ENCODE measurements at regions of chrX and their contacts with region 1.

Region 1: DNA sequence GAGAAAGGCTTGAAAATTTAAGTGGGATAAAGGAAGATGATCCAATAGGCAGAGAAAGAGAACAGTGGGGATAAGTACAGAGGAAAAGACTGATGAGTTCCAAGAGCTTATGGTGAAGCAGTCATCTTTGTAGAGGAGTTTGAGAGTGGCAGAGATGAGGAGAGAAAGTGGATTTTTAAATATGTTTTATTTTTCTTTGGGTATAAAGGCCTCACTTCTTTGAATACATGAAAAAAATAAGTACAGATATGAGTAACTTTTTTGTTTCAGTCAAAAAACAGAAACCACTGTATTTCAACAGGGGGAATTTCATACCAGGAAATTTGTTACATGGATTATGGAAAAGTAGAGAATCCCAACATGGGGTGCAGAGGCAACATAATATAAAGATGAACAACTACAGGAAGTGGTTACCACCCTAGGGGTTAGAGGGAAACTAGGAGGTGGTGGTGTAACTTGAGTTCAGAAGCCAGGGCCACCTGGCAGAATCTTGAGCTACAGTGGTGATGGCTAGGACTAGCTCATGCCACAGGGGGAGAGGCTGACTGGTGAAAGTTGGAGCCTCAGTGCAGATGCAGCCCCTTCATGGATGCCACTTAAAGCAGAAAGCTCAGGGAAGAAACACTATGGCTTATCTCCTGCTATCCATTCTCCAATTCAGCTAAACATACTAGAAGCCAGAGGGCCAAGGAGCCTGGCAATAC is 3.4 kb upstream of the CYBB start:
- DNase-seq: no peak
- ATAC-seq: peak; percentile 80
- H3K4me3 ChIP-seq: peak overlapping the region; percentile 23; the same call in 1 of the 2 replicates
- H3K27ac ChIP-seq: peak overlapping the region; percentile 85
- H3K4me1 ChIP-seq: peaks cover 22% of the 10 kb centered on the region
- H3K27me3 ChIP-seq: no peaks in the 10 kb centered on the region
- CTCF ChIP-seq: no peak
- EP300 ChIP-seq: no peak
- POLR2A ChIP-seq: no peak
- RAD21 ChIP-seq: no peak

Region 2: GRCh38 chrX:37666516-37666915 is 109.9 kb before region 1 on chrX:
- CTCF ChIA-PET with region 1: no interaction called
- POLR2A ChIA-PET with region 1: no interaction called
- RAD21 ChIA-PET with region 1: no interaction called
- SMC1A ChIA-PET with region 1: no interaction called
- in situ Hi-C with region 1: no loop called
- intact Hi-C with region 1: no loop called
- DNase-seq: no peak
- ATAC-seq: no peak
- H3K4me3 ChIP-seq: no peak overlapping the region
- H3K27ac ChIP-seq: no peak overlapping the region
- H3K4me1 ChIP-seq: no peaks in the 10 kb centered on the region
- H3K27me3 ChIP-seq: no peaks in the 10 kb centered on the region
- CTCF ChIP-seq: no peak
- EP300 ChIP-seq: no peak
- POLR2A ChIP-seq: no peak
- RAD21 ChIP-seq: no peak

Region 3: DNA sequence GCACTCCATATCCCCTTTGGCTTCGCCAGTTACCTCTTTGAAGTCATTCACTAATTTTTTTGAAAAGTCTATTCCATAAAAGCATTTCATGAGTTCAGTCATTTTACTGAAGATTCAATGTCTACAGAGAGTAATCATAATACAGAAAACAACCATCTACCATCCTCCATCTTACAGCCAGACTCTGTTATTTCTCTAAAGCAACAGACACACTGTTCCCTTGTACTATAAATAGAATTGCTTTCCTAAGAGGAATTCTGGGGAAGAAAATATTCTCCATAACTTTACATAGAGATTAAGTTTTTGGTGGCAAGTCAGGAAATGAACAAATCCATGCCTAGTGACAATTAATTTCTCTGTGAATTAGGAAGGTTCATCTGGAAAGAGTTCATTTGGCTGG is 53.8 kb before region 1 on chrX:
- CTCF ChIA-PET with region 1: no interaction called
- POLR2A ChIA-PET with region 1: no interaction called
- RAD21 ChIA-PET with region 1: no interaction called
- SMC1A ChIA-PET with region 1: no interaction called
- in situ Hi-C with region 1: no loop called
- intact Hi-C with region 1: no loop called
- DNase-seq: no peak
- ATAC-seq: no peak
- H3K4me3 ChIP-seq: no peak overlapping the region
- H3K27ac ChIP-seq: no peak overlapping the region
- H3K4me1 ChIP-seq: no peaks in the 10 kb centered on the region
- H3K27me3 ChIP-seq: no peaks in the 10 kb centered on the region
- CTCF ChIP-seq: no peak
- EP300 ChIP-seq: no peak
- POLR2A ChIP-seq: no peak
- RAD21 ChIP-seq: no peak

Region 4: DNA sequence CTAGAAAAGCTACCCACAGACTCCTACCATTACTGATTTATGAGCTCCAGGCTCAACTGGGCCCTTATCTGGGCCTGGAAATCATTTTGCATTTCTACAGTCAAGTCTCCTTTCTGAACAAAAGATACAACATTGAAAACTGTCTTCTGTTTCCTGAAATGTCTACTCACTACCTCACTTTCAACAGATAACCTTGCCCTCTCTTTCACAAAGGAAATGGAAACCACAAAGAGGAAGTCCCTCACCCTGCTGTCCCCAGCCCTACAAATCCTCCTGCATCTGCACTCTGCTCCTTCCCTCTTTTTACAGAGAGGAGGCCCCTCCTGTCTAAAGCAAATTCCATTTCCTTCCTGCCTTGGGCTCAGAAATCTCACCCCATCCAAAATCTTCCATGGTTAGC is 21.4 kb before region 1 on chrX:
- CTCF ChIA-PET with region 1: interaction called, 9 read pairs
- POLR2A ChIA-PET with region 1: interaction called, 13 read pairs
- RAD21 ChIA-PET with region 1: interaction called, 7 read pairs
- SMC1A ChIA-PET with region 1: interaction called, 72 read pairs
- in situ Hi-C with region 1: no loop called
- intact Hi-C with region 1: no loop called
- DNase-seq: peak; percentile 67
- ATAC-seq: peak; percentile 92
- H3K4me3 ChIP-seq: peak overlapping the region; percentile 10; the same call in 1 of the 2 replicates
- H3K27ac ChIP-seq: peak overlapping the region; percentile 87
- H3K4me1 ChIP-seq: peaks cover 32% of the 10 kb centered on the region
- H3K27me3 ChIP-seq: no peaks in the 10 kb centered on the region
- CTCF ChIP-seq: no peak
- EP300 ChIP-seq: peak in 1 of 2 experiments; percentile 57; a peak in 1 of 4 replicates
- POLR2A ChIP-seq: no peak
- RAD21 ChIP-seq: no peak

Region 5: DNA sequence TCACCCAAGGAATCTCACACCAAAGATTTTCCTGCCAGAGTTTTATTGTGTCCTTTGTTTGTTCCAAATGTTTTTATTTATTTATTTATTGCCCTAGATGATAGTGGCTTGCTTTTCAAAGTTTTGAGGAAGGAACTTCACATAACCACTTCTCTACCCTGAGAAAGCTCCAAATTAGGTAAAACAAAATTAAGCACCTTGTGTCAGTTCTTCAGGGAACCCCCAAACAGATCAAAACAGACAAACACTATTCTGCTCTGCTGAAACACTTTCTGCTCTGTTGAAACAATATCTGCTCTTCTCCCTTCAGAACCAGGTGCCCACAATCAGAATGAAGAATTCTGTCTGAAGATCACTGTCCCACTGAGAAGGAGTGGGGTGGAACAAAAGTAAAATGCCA is 13.0 kb before region 1 on chrX:
- CTCF ChIA-PET with region 1: interaction called, 16 read pairs
- POLR2A ChIA-PET with region 1: interaction called, 7 read pairs
- RAD21 ChIA-PET with region 1: interaction called, 11 read pairs
- SMC1A ChIA-PET with region 1: interaction called, 40 read pairs
- in situ Hi-C with region 1: no loop called
- intact Hi-C with region 1: no loop called
- DNase-seq: no peak
- ATAC-seq: peak; percentile 69
- H3K4me3 ChIP-seq: no peak overlapping the region
- H3K27ac ChIP-seq: peak overlapping the region; percentile 33; the same call in 1 of the 2 replicates
- H3K4me1 ChIP-seq: peaks cover 5% of the 10 kb centered on the region; the same call in 1 of the 2 replicates
- H3K27me3 ChIP-seq: no peaks in the 10 kb centered on the region
- CTCF ChIP-seq: no peak
- EP300 ChIP-seq: no peak
- POLR2A ChIP-seq: no peak
- RAD21 ChIP-seq: no peak

Region 6: GRCh38 chrX:37818031-37818430 is 41.6 kb after region 1 on chrX:
- CTCF ChIA-PET with region 1: interaction called, 73 read pairs
- POLR2A ChIA-PET with region 1: interaction called, 3 read pairs
- RAD21 ChIA-PET with region 1: interaction called, 29 read pairs
- SMC1A ChIA-PET with region 1: interaction called, 138 read pairs
- in situ Hi-C with region 1: no loop called
- intact Hi-C with region 1: loop called (anchors 5 kb)
- DNase-seq: no peak
- ATAC-seq: peak; percentile 45
- H3K4me3 ChIP-seq: no peak overlapping the region
- H3K27ac ChIP-seq: peak overlapping the region; percentile 37; the same call in 1 of the 2 replicates
- H3K4me1 ChIP-seq: peaks cover 20% of the 10 kb centered on the region
- H3K27me3 ChIP-seq: no peaks in the 10 kb centered on the region; a peak in 1 of 4 replicates
- CTCF ChIP-seq: no peak
- EP300 ChIP-seq: no peak
- POLR2A ChIP-seq: no peak
- RAD21 ChIP-seq: no peak

Region 7: DNA sequence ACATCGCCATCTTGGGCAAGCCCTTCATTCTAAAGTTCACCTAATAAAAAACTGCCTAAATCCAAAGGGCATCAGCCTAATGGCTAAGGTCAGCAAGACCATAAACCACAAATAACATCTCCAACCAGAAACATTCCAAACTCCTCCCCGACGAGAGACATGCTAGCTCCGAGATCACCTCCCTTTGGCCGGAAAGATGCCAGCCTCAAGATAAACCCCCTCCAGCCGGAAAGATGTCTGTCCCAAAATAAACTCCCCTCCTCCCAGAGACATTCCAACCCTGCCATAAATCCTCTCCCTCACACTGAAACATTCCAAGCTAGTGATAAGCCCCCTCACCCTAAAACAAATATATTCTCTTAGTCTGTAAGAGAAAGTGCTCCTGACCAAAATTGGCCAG is 84.3 kb after region 1 on chrX:
- CTCF ChIA-PET with region 1: no interaction called
- POLR2A ChIA-PET with region 1: no interaction called
- RAD21 ChIA-PET with region 1: no interaction called
- SMC1A ChIA-PET with region 1: no interaction called
- in situ Hi-C with region 1: no loop called
- intact Hi-C with region 1: no loop called
- DNase-seq: no peak
- ATAC-seq: no peak
- H3K4me3 ChIP-seq: no peak overlapping the region
- H3K27ac ChIP-seq: no peak overlapping the region
- H3K4me1 ChIP-seq: no peaks in the 10 kb centered on the region
- H3K27me3 ChIP-seq: no peaks in the 10 kb centered on the region
- CTCF ChIP-seq: no peak
- EP300 ChIP-seq: no peak
- POLR2A ChIP-seq: no peak
- RAD21 ChIP-seq: no peak

Region 8: DNA sequence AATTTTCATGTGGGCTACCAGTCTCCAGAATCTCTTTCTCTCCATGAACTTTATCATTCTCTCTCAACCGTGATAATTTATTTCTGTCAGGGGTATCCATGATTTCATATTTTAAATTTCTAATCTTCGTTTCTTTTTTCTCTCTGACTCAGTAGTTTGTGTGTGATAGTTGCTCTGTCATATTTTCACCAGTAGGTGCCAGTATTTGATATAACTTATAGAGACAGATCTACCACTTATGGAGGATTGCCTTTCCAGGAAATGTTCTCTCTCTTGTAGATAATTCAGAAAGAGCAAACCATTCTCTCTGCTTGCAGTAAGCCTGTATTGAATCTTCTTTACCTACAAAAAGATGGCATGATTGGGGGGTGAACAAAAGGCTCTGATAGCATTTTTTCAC is 150.3 kb after region 1 on chrX:
- CTCF ChIA-PET with region 1: no interaction called
- POLR2A ChIA-PET with region 1: no interaction called
- RAD21 ChIA-PET with region 1: no interaction called
- SMC1A ChIA-PET with region 1: no interaction called
- in situ Hi-C with region 1: no loop called
- intact Hi-C with region 1: no loop called
- DNase-seq: peak; percentile 4
- ATAC-seq: peak; percentile 84
- H3K4me3 ChIP-seq: no peak overlapping the region
- H3K27ac ChIP-seq: no peak overlapping the region
- H3K4me1 ChIP-seq: no peaks in the 10 kb centered on the region
- H3K27me3 ChIP-seq: no peaks in the 10 kb centered on the region
- CTCF ChIP-seq: peak in 2 of 3 experiments; percentile 46 to 50; a peak in 3 of 6 replicates
- EP300 ChIP-seq: no peak
- POLR2A ChIP-seq: no peak
- RAD21 ChIP-seq: peak; percentile 60

Measured in GM12878 (cell line).